Posterior cingulate gyrus (tissue), 11 donors: ENCODE measurements at regions of chr12 and their contacts with region 1.

Region 1: GRCh38 chr12:56987551-56988053 is 18.7 kb downstream of the ZBTB39 start:
- DNase-seq: peak; percentile 73 to 98 (median 86)

Region 2: DNA sequence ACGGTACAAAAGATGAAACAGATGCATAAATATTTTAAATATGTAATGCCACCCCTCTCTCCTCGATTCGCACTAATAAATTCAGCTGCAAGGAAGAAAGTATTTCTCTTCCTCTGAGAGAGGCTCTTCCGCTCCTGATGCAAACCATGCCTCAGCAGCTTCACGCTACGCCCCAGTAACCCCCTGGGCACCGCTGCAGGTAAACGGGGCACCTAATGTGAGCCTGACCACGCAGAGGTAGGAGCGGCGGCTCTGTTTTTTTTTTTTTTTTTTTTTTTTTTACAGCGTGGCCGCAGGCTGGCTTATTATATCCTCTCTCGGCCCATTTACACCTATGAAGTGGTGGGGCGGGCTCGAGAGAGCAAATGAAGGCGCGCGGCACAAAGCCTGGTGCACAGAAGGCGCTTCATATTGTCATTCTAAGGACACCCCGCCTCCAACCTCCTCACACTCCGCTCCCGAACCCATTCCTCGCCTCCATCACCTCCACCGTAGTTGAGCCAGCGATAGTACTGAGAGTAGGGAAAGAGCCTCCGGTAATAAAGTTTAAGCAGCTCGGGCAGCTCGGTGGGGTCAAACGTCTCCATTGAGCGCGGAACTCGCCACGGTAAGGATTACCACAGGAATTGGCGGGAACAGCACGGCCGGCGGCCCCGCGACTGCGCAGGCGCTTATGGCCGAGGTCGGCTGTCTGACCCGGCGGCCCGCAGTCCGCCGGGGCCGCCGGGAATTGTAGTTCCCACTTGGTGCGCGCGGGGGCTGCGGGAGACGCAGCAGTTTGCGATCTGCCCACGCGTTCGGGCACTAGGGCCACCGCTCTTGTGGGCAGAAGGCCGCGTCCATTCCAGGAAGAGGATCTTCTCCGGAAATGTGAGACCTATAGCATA is 235.6 kb before region 1 on chr12 and contains the start of gene PRIM1:
- intact Hi-C with region 1: loop called (anchors 1 kb)
- DNase-seq: peak; percentile 74 to 98 (median 82)

Region 3: GRCh38 chr12:56839915-56840325 is 147.7 kb before region 1 on chr12:
- intact Hi-C with region 1: loop called (anchors 2 kb)
- DNase-seq: peak in 9 of 10 donors; percentile 13 to 86 (median 32)

Region 4: DNA sequence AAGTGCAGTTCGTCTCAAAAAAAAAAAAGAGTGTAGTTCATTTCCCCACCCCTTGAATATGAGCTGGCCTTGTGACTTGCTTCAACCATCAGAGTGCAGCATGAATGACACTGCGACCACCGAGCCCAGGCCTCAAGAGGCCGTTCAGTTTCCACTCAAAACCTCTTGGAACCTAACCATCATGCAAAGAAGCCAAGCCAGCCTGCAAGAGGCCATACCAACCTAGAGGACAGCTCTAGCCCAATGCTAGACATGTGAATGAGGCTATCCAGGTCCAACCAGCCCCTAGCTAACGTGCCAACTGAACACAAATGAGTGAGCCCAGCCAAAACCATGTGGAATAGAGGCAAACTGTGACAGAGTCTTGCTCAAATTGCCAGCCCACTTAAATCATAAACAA is 413.6 kb after region 1 on chr12:
- intact Hi-C with region 1: no loop called
- DNase-seq: no peak